Dendritic cell treated with granulocyte-macrophage colony-stimulating factor and Interleukin-4, amounts not matched to agents 40 ng/mL and 50 ng/mL, for 4 days (primary cell): ENCODE measurements at regions of chr7 and their contacts with region 1.

Region 1: GRCh38 chr7:154927624-154928143 is 75.2 kb downstream of the PAXIP1 start:
- H3K4me3 Mint-ChIP-seq: peak overlapping the region; percentile 98
- H3K27ac Mint-ChIP-seq: peak overlapping the region; percentile 98
- H3K4me1 Mint-ChIP-seq: peaks cover 19% of the 10 kb centered on the region
- H3K27me3 Mint-ChIP-seq: peaks cover 4% of the 10 kb centered on the region

Region 2: GRCh38 chr7:155003376-155004214 is 75.9 kb after region 1 on chr7:
- intact Hi-C with region 1: loop called (anchors 2 kb)
- H3K4me3 Mint-ChIP-seq: peak overlapping the region; percentile 81
- H3K27ac Mint-ChIP-seq: peak overlapping the region; percentile 68
- H3K4me1 Mint-ChIP-seq: peaks cover 9% of the 10 kb centered on the region
- H3K27me3 Mint-ChIP-seq: no peaks in the 10 kb centered on the region

Region 3: DNA sequence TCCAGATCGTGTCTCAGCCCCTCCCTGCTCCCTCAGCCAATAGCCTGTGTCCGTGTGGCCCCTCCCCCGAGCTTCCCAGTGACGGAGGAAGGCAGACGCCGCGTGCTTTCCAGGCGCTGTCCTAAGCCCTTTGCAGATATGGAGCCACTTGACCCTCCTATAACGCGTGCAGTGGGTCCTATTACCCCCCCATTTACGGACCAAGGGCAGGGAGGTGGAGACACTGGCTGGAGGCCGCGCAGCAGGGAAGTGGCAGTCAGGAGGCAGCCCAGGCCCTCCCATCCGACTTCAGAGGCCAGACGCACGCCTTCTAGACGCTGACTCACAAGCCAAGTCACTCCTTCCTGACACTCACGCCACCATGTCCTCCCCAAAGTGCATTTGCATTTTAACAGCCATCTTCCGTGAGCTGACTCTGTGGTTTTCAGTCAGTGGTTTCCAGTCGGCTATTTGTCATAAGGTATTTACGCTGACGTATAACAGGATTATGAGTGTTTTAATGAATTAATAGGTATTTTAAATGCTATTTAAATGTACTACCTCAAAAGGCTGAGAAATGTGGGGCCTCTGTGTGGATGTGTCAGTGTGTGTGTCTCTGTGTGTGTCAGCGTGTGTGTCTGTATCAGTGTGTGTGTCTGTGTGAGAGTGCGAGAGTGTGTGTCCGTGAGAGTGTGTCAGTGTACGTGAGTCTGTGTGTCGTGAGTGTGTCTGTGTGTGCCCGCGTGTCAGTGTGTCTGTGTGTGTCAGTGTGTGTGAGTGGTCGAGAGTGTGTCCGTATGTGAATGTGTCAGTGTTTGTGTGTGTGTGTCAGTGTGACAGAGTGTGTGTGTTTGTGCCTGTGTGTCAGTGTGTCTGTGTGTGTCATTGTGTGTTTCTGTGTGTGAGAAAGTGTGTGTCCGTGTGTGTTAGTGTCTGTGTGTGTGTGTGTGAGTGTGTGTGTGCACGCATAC is 278.0 kb after region 1 on chr7:
- intact Hi-C with region 1: loop called (anchors 5 kb)
- H3K4me3 Mint-ChIP-seq: peak overlapping the region; percentile 79
- H3K27ac Mint-ChIP-seq: peak overlapping the region; percentile 97
- H3K4me1 Mint-ChIP-seq: peaks cover 88% of the 10 kb centered on the region
- H3K27me3 Mint-ChIP-seq: no peaks in the 10 kb centered on the region

Region 4: DNA sequence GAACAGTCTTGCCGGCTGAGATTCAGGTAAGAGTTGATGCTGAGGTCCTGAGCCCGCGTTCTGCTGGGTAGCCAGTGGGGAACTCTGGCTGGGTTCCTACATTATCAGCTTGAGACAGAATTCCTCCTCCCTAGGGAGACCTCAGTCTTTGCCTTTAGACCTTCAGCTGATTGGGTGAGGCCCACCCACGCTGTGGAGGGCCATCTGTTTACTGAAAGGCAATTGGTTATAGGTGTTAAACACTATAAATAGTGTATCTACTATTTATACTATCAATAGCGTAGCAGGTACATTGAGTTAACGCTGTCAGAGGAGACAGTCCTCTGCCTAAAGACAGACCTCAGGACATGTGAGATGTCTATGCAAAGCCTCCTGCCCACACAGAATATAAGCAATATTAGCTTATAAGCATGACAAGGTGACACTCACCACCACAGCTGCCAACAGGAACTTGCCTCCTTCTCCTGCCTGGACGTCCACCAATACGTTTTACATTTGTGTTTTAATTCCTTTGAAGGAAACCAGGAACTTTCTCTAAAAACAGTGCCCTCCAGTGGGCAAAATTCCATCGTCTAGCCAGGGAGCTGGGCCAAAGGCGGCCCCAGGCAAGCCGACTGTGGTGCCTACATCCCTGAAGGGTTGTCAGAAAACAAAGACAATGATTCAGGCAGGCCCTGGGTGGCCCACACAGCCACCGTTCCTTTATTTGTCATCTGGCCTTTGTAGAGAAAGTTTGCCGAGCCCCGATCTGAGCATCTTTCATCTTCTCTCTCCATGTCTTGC is 428.8 kb after region 1 on chr7:
- intact Hi-C with region 1: loop called (anchors 5 kb)
- H3K4me3 Mint-ChIP-seq: no peak overlapping the region
- H3K27ac Mint-ChIP-seq: no peak overlapping the region
- H3K4me1 Mint-ChIP-seq: peaks cover 39% of the 10 kb centered on the region
- H3K27me3 Mint-ChIP-seq: peaks cover 10% of the 10 kb centered on the region